H1 (cell line): ENCODE measurements at regions of chr6 and their contacts with region 1.

Region 1: DNA sequence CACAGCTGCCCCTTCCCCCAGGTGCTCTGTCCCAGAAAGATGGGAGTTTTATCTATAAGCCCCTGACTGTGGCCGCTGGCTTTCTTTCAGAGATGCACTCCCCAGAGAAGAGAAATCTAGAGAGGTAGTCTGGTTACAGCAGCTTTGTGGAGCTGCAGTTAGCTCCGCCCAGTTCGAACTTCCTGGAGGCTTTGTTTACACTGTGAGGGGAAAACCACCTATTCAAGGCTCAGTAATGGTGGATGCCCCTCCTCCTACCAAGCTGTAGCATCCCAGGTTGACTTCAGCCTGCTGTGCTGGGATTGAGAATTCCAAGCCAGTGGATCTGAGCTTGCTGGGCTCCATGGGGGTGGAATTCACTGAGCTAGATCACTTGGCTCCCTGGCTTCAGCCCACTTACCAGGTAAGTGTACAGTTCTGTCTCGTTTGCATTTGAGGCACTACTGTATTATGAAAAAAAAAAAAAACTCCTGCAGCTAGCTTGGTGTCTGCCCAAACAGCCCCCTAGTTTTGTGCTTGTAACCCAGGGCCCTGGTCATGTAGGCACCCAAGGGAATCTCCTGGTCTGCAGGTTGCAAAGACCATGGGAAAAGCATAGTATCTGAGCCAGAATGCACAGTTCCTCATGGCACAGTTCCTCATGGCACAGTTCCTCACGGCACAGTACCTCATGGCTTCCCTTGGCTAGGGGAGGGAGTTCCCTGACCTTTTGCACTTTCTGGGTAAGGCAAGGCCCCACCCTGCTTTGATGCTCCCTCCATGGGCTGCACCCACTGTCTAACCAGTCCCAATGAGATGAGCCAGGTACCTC is 274.9 kb downstream of the CENPW start:
- DNase-seq: peak in 1 of 2 experiments; percentile 49
- H3K4me3 ChIP-seq: no peak overlapping the region; a peak in 2 of 8 replicates
- H3K27ac ChIP-seq: no peak overlapping the region; the same call in 1 of the 2 replicates
- H3K4me1 ChIP-seq: peaks cover 0 to 3% (median 0%) of the 10 kb centered on the region in 4 experiments; a peak in 1 of 7 replicates
- H3K27me3 ChIP-seq: no peaks in the 10 kb centered on the region
- CTCF ChIP-seq: no peak
- EP300 ChIP-seq: no peak
- POLR2A ChIP-seq: no peak
- RAD21 ChIP-seq: no peak

Region 2: DNA sequence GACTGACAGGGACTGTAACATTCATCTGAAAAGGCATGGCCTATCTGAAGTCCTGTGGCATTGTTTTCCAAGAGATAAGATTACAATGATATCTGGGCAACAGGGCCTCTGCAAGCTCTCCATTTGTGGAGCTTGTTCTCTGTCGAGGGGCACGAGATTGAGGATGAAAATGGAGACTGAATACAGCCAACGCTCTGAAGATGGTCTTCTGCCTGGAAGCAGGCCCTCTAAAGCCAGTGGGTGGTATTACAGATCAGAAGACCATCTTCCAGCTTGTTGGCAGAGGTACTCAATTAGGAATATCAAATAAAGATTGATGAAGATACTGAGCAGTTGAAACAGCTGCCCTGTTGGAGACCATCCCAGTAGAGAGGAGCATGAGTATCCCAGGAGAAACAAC is 13.3 kb after region 1 on chr6:
- CTCF ChIA-PET with region 1: interaction called, 18 read pairs
- POLR2A ChIA-PET with region 1: no interaction called
- DNase-seq: no peak
- H3K4me3 ChIP-seq: no peak overlapping the region
- H3K27ac ChIP-seq: no peak overlapping the region
- H3K4me1 ChIP-seq: peaks cover 0 to under 1% (median under 1%) of the 10 kb centered on the region in 4 experiments; a peak in 1 of 7 replicates
- H3K27me3 ChIP-seq: no peaks in the 10 kb centered on the region
- CTCF ChIP-seq: peak in 1 of 3 experiments; percentile 40; a peak in 1 of 4 replicates
- EP300 ChIP-seq: no peak
- POLR2A ChIP-seq: no peak
- RAD21 ChIP-seq: peak; percentile 20 to 35; a peak in 2 of 4 replicates

Region 3: DNA sequence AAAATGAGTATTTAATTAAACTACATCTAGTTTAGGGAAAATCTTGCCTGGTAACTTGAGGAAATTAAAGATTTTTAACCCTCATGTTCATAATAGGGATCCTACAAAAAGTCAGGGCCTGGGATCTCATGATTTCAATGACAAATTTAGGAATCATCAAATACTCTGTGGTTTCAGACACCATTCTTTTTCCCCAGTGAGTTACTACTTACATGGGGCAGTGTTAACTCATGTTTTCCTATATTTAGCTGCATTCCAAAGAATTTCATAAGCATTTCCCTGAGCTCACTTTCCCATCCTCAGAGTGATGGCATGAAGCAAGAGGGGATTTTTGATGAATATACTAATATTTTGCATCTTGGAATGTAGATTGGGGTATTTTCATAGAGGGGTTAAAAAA is 46.8 kb after region 1 on chr6:
- CTCF ChIA-PET with region 1: no interaction called
- POLR2A ChIA-PET with region 1: no interaction called
- DNase-seq: no peak
- H3K4me3 ChIP-seq: no peak overlapping the region
- H3K27ac ChIP-seq: no peak overlapping the region
- H3K4me1 ChIP-seq: no peaks in the 10 kb centered on the region
- H3K27me3 ChIP-seq: no peaks in the 10 kb centered on the region
- CTCF ChIP-seq: no peak
- EP300 ChIP-seq: no peak
- POLR2A ChIP-seq: no peak
- RAD21 ChIP-seq: no peak

Region 4: DNA sequence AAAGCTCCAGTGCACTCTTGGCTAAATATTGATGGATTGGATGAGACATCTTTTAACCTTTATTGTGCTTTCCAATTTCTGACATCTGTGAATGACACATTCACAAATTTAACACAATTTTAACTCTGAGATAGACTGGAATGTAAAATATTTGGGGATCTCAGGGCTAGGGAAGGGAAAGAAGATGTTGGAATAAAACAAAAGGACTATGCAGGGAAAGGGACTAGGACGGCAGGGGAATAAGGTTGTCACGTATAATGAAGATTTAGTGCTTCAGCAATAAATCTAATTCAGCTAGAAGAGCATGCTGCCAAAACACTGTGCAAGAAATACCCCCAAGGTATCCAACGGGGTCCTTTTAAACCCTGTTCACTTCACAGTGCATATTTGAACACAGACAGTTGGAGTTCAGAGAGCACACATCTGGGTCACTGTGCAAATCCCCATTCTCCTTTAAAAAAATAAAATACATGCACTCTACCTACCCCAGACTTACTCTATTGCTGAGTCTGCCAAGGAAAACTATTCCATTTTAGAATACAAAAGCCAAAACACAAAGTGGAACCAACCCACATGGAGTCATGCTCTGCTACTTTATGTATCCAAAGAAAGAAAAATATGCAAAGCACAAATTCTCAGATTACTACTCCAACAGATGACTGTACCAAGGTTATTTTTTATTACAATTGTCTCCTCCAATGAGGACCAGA is 352.6 kb after region 1 on chr6:
- CTCF ChIA-PET with region 1: no interaction called
- POLR2A ChIA-PET with region 1: no interaction called
- DNase-seq: no peak
- H3K4me3 ChIP-seq: no peak overlapping the region
- H3K27ac ChIP-seq: no peak overlapping the region
- H3K4me1 ChIP-seq: peaks cover 0 to 7% (median 2%) of the 10 kb centered on the region in 4 experiments; a peak in 5 of 7 replicates
- H3K27me3 ChIP-seq: no peaks in the 10 kb centered on the region
- CTCF ChIP-seq: no peak
- EP300 ChIP-seq: no peak
- POLR2A ChIP-seq: no peak
- RAD21 ChIP-seq: no peak